GM12878 (cell line): ENCODE measurements at regions of chr3 and their contacts with region 1.

Region 1: DNA sequence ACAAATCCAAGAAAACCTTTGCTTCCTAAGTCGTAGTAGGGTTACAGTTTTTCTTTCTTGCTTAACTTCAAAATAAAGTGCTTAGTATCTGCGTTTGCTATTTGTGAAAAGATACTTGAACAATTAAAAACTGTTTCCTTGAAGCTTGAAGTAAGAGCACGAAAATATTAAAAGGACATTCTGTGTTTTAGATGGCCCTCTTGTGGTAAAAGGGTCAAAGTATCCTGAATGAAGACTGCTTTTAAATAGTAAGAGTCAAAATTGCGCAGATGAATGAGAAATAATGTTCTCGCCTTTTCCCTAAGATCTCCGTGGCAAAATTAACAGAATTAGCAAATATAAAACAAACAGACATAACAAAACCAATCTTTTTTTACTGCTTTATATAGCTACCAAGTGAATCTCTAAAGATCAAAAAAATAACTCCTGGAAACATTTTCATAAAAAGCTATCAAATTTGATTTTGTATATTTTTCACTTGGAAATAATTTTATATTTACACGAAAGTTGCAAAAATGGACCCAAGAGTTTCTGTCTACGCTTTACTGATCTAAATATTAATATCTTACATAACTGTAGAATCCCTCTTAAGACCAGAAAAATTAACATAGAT is 175.4 kb downstream of the MBNL1 start:
- DNase-seq: peak; percentile 33
- ATAC-seq: peak; percentile 75
- H3K4me3 ChIP-seq: no peak overlapping the region
- H3K27ac ChIP-seq: no peak overlapping the region; the same call in 1 of the 2 replicates
- H3K4me1 ChIP-seq: peaks cover 13% of the 10 kb centered on the region; the same call in 1 of the 2 replicates
- H3K27me3 ChIP-seq: no peaks in the 10 kb centered on the region
- CTCF ChIP-seq: peak; percentile 48 to 70 (median 59); a peak in 5 of 6 replicates
- EP300 ChIP-seq: no peak
- POLR2A ChIP-seq: no peak
- RAD21 ChIP-seq: peak; percentile 91

Region 2: GRCh38 chr3:152177757-152178156 is 266.4 kb before region 1 on chr3:
- CTCF ChIA-PET with region 1: interaction called, 282 read pairs
- POLR2A ChIA-PET with region 1: no interaction called
- RAD21 ChIA-PET with region 1: interaction called, 138 read pairs
- SMC1A ChIA-PET with region 1: interaction called, 211 read pairs
- in situ Hi-C with region 1: loop called (anchors 5 kb)
- intact Hi-C with region 1: no loop called
- DNase-seq: no peak
- ATAC-seq: peak; percentile 97
- H3K4me3 ChIP-seq: no peak overlapping the region
- H3K27ac ChIP-seq: no peak overlapping the region
- H3K4me1 ChIP-seq: no peaks in the 10 kb centered on the region
- H3K27me3 ChIP-seq: no peaks in the 10 kb centered on the region
- CTCF ChIP-seq: no peak
- EP300 ChIP-seq: no peak
- POLR2A ChIP-seq: no peak
- RAD21 ChIP-seq: no peak

Region 3: GRCh38 chr3:152241142-152242017 is 202.8 kb before region 1 on chr3:
- CTCF ChIA-PET with region 1: interaction called, 13 read pairs
- POLR2A ChIA-PET with region 1: no interaction called
- RAD21 ChIA-PET with region 1: interaction called, 8 read pairs
- SMC1A ChIA-PET with region 1: interaction called, 23 read pairs
- in situ Hi-C with region 1: no loop called
- intact Hi-C with region 1: no loop called
- DNase-seq: no peak
- ATAC-seq: peak; percentile 69
- H3K4me3 ChIP-seq: no peak overlapping the region
- H3K27ac ChIP-seq: peak overlapping the region; percentile 91
- H3K4me1 ChIP-seq: peaks cover 27% of the 10 kb centered on the region
- H3K27me3 ChIP-seq: no peaks in the 10 kb centered on the region
- CTCF ChIP-seq: no peak
- EP300 ChIP-seq: no peak
- POLR2A ChIP-seq: no peak
- RAD21 ChIP-seq: no peak

Region 4: GRCh38 chr3:152298393-152299242 is 145.5 kb before region 1 on chr3:
- CTCF ChIA-PET with region 1: interaction called, 6 read pairs
- POLR2A ChIA-PET with region 1: no interaction called
- RAD21 ChIA-PET with region 1: interaction called, 7 read pairs
- SMC1A ChIA-PET with region 1: interaction called, 22 read pairs
- in situ Hi-C with region 1: no loop called
- intact Hi-C with region 1: no loop called
- DNase-seq: peak; percentile 74
- ATAC-seq: peak; percentile 71
- H3K4me3 ChIP-seq: peak overlapping the region; percentile 8
- H3K27ac ChIP-seq: peak overlapping the region; percentile 56
- H3K4me1 ChIP-seq: peaks cover 40% of the 10 kb centered on the region
- H3K27me3 ChIP-seq: no peaks in the 10 kb centered on the region
- CTCF ChIP-seq: no peak
- EP300 ChIP-seq: no peak
- POLR2A ChIP-seq: no peak
- RAD21 ChIP-seq: no peak

Region 5: DNA sequence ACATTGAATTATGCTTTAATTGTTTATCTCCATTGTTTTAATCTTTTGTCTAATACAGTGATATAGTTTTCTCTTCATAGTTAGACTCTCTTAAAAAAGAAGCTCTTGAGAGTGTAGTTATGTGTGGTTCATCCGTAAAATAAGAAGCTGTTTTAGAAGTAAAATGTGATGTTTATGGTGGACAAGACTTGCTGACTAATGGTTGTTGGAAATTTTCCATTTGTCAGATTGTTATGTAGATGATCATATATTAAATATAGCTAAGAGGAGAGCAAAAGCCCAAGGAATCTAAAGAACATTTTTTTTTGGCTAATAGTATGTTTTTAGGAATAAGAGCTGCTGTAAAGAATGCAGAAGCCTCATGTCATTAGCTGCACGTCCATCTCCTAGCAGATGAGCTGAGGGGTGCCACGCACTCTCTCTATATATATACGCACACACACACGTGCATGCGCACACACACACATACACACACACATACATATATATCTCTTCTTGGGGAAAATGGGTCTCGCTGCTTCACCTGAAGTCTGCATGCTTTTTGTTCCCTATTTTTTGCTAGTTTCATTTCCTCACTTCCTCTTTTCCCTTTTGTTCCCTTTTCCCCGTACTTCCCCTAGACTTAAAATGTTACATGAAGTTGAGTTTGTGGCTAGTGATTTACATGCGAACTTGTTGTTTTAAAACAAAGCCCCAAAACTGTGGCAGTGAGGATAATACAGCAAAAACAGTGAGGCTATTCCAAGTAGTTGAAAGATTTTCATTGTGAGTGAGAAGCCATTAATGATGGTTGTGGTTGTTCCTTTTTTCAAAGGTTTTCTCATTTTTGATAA is 67.6 kb before region 1 on chr3:
- CTCF ChIA-PET with region 1: interaction called, 10 read pairs
- POLR2A ChIA-PET with region 1: interaction called, 3 read pairs
- RAD21 ChIA-PET with region 1: interaction called, 14 read pairs
- SMC1A ChIA-PET with region 1: interaction called, 25 read pairs
- in situ Hi-C with region 1: no loop called
- intact Hi-C with region 1: no loop called
- DNase-seq: peak; percentile 97
- ATAC-seq: peak; percentile 83
- H3K4me3 ChIP-seq: no peak overlapping the region; the same call in 1 of the 2 replicates
- H3K27ac ChIP-seq: peak overlapping the region; percentile 90
- H3K4me1 ChIP-seq: peaks cover 30% of the 10 kb centered on the region
- H3K27me3 ChIP-seq: no peaks in the 10 kb centered on the region
- CTCF ChIP-seq: no peak
- EP300 ChIP-seq: peak; percentile 95 to 99
- POLR2A ChIP-seq: peak; percentile 53
- RAD21 ChIP-seq: no peak

Region 6: DNA sequence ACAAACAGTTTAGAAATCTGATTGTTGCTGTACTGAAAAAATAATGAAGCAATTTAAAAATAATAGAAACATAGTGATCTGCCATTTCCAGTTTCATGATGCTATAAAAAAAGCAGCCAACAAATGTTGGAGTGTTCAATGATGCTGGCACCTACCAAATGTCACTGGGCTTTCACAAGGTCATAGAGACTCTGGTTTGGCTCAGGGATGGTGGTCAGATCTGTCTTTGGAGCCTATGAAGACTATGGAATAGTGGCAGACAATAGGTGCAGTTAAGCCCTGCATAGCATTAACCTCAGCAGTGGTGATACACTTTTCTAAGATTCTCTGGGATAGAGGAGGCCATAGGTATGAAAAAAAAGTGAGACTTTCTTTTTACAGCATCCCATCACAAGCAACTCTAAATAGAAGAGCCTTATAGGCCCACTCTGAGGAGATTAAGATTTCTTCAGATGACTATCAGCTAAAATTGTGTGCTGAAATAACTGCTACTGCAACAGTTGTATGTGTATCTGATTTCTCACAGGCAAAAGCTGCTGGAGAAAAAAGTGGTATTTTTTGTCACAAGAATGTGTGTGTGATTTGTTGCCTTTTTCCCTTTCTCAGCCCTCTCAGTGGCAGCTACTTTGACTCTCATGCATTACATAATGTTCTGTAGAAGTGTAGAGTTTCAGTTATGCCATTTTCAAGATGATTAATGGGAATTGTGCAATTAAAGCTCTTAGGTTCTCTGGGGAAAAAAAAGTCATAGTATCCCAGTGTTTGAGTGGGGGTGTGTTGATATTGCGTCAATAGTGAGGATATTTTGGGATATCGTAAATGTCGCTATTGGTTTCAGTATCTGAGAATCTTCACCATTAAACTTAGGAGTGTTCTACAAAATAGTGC is 38.0 kb before region 1 on chr3:
- CTCF ChIA-PET with region 1: interaction called, 4 read pairs
- POLR2A ChIA-PET with region 1: no interaction called
- RAD21 ChIA-PET with region 1: interaction called, 19 read pairs
- SMC1A ChIA-PET with region 1: interaction called, 23 read pairs
- in situ Hi-C with region 1: no loop called
- intact Hi-C with region 1: no loop called
- DNase-seq: no peak
- ATAC-seq: peak; percentile 22; the same call in 2 of the 3 replicates
- H3K4me3 ChIP-seq: no peak overlapping the region
- H3K27ac ChIP-seq: no peak overlapping the region
- H3K4me1 ChIP-seq: no peaks in the 10 kb centered on the region; the same call in 1 of the 2 replicates
- H3K27me3 ChIP-seq: no peaks in the 10 kb centered on the region
- CTCF ChIP-seq: no peak
- EP300 ChIP-seq: no peak
- POLR2A ChIP-seq: no peak
- RAD21 ChIP-seq: no peak

Region 7: DNA sequence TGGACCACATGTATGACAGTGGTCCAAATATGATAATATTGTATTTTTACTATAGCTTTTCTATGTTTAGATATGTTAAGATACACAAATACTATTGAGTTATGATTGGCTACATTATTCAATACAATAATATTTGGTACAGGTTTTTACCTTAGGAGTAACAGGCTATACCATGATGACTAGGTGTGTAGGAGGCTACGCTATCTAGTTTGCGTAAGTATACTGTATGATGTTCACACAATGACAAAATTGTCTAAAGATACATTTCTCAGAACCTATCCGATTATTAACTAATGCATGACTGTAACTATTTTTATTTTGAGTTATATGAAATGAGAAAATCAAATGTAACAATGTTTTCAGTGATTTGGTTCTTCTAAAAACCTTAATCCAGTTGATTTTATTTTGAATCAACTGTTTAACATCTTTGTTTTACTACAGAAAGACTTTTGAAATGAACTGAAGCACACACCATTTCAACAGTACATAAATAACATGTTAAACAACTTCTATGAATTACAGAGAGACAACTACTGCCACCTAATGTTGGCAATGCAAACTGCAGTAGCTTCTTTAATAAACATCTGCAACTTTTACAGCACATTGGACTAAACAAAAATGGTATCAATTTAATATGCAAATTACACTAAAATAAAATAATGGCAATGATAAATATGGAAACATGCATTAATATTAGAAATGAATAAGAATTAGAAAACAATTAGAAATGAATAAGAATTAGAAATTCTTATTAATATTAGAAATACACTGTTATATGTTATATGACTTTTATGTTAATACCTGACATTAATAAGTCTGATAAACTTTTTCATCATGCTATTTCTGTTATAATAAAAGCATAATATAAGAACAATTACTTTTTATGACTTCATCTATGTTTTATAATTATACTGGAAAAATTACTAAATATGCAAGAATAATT is 80.3 kb after region 1 on chr3:
- CTCF ChIA-PET with region 1: interaction called, 5 read pairs
- POLR2A ChIA-PET with region 1: no interaction called
- RAD21 ChIA-PET with region 1: interaction called, 4 read pairs
- SMC1A ChIA-PET with region 1: interaction called, 12 read pairs
- in situ Hi-C with region 1: no loop called
- intact Hi-C with region 1: no loop called
- DNase-seq: no peak
- ATAC-seq: peak; percentile 74
- H3K4me3 ChIP-seq: no peak overlapping the region
- H3K27ac ChIP-seq: no peak overlapping the region
- H3K4me1 ChIP-seq: no peaks in the 10 kb centered on the region
- H3K27me3 ChIP-seq: no peaks in the 10 kb centered on the region
- CTCF ChIP-seq: peak; percentile 69 to 80 (median 79); a peak in 5 of 6 replicates
- EP300 ChIP-seq: no peak
- POLR2A ChIP-seq: no peak
- RAD21 ChIP-seq: peak; percentile 90